Panc1 (cell line): ENCODE measurements at regions of chr17 and their contacts with region 1.

Region 1: DNA sequence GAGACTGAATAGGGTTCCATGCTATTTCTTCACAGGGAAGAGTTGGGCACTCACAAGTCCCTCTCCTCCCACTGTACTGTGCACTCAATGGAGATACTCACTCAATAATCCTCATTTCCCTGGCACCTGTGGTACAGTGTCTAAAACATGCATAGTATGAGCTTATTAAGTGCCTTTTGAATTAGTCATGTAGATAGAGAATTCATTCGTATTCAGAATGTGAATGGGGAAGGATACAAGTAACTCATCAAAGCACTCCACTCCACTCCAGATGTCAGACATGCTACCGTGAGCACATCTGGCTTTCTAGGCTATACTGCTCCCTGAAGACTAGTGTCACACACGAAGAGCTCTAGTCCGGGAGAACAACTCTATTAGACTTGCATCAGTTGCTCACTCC is 6.3 kb downstream of the C17orf75 start:
- DNase-seq: no peak
- ATAC-seq: peak; percentile 57; the same call in 1 of the 2 replicates
- H3K4me3 ChIP-seq: no peak overlapping the region
- H3K27ac ChIP-seq: no peak overlapping the region
- H3K4me1 ChIP-seq: no peaks in the 10 kb centered on the region
- H3K27me3 ChIP-seq: no peaks in the 10 kb centered on the region
- CTCF ChIP-seq: no peak

Region 2: GRCh38 chr17:31599000-31599571 is 736.6 kb before region 1 on chr17:
- CTCF ChIA-PET with region 1: no interaction called
- POLR2A ChIA-PET with region 1: interaction called, 10 read pairs
- in situ Hi-C with region 1: no loop called
- intact Hi-C with region 1: no loop called
- DNase-seq: no peak
- ATAC-seq: peak; percentile 50
- H3K4me3 ChIP-seq: no peak overlapping the region
- H3K27ac ChIP-seq: peak overlapping the region; percentile 83
- H3K4me1 ChIP-seq: peaks cover 64% of the 10 kb centered on the region
- H3K27me3 ChIP-seq: no peaks in the 10 kb centered on the region
- CTCF ChIP-seq: no peak

Region 3: DNA sequence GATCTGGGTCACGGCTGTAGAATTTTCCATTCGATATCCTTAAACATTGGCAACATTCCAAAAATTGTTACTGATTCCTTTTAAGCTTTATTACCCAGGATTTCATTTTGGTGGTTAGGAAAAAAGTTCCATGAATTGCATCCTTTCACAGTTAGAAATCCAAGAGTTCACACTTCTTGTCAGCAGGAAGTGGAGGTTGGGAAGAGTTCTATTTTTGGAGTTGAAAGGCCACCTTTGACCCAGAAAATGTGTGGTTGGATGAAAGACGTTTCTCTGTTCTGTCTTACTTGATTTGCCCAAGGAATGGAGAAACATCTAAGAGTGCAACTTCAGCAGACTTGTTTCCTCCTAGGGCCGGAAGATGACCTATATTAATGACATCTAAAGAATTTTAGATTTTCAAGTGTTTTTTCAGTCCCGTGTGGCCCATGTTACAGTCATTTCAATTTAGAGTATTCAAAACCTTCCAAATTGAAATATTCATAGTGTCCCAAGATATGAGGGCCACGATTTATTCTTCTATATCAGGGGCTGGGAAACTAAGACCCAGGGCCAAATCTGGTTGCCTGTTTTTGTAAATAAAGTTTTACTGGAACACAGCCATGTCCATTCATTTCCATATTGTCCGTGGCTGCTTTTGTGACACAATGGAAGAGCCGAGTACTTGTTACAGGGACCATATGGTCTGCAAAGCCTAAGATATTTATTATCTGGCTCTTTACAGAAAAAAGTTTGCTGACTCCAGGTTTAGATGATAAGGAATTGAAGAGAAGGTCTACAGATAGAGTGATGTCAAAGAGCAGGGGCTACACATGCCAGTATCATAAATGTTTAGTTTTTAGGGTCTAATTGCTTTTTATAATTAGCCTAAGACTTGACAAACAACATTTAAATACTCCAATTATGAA is 201.3 kb after region 1 on chr17:
- CTCF ChIA-PET with region 1: no interaction called
- POLR2A ChIA-PET with region 1: no interaction called
- in situ Hi-C with region 1: no loop called
- intact Hi-C with region 1: no loop called
- DNase-seq: no peak
- ATAC-seq: no peak
- H3K4me3 ChIP-seq: no peak overlapping the region
- H3K27ac ChIP-seq: no peak overlapping the region
- H3K4me1 ChIP-seq: no peaks in the 10 kb centered on the region
- H3K27me3 ChIP-seq: no peaks in the 10 kb centered on the region
- CTCF ChIP-seq: no peak